CD14-positive monocyte (primary cell): ENCODE measurements at regions of chr1 and their contacts with region 1.

Region 1: GRCh38 chr1:155989242-155990004 is 11.1 kb upstream of the ARHGEF2 start:
- DNase-seq: peak; percentile 80 to 89 (median 85)
- H3K4me3 ChIP-seq: peak overlapping the region; percentile 28 to 72 (median 35)
- H3K4me3 Mint-ChIP-seq: peak overlapping the region; percentile 79 to 89
- H3K27ac ChIP-seq: peak overlapping the region; percentile 94 to 97
- H3K27ac Mint-ChIP-seq: peak overlapping the region; percentile 97 to 100 (median 99)
- H3K4me1 ChIP-seq: peaks cover 40 to 41% of the 10 kb centered on the region in 2 donors
- H3K4me1 Mint-ChIP-seq: peaks cover 50% of the 10 kb centered on the region
- H3K27me3 ChIP-seq: no peaks in the 10 kb centered on the region
- H3K27me3 Mint-ChIP-seq: no peaks in the 10 kb centered on the region
- CTCF ChIP-seq: peak; percentile 99

Region 2: DNA sequence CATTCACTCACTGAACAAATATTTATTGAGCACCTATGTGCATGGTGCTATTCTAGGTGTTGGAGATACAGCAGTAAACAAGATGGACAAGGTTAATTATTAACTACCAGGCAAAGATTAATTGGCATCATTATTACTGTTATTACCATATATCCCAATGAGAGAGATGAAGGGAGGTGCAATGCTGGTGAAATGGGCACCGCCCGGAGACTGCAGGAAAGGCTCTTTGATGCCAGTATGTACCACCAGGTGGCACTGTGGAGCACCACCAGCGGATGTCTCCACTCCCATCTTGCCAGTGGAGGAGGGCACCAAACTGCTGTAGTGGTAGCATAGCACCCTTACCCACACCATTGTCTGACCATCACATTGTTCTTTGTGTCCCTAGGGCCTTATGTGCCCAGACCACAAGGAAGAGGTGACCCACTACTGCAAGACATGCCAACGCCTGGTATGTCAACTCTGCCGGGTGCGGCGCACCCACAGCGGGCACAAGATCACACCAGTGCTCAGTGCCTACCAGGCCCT is 812.8 kb before region 1 on chr1:
- intact Hi-C with region 1: no loop called
- DNase-seq: peak; percentile 73 to 76 (median 73)
- H3K4me3 ChIP-seq: no peak overlapping the region
- H3K4me3 Mint-ChIP-seq: no peak overlapping the region
- H3K27ac ChIP-seq: no peak overlapping the region
- H3K27ac Mint-ChIP-seq: peak overlapping the region in 1 of 7 donors; percentile 30
- H3K4me1 ChIP-seq: peaks cover 42 to 52% of the 10 kb centered on the region in 2 donors
- H3K4me1 Mint-ChIP-seq: peaks cover 48% of the 10 kb centered on the region
- H3K27me3 ChIP-seq: no peaks in the 10 kb centered on the region
- H3K27me3 Mint-ChIP-seq: peaks cover 4 to 22% (median 21%) of the 10 kb centered on the region in 3 donors
- CTCF ChIP-seq: peak; percentile 92

Region 3: DNA sequence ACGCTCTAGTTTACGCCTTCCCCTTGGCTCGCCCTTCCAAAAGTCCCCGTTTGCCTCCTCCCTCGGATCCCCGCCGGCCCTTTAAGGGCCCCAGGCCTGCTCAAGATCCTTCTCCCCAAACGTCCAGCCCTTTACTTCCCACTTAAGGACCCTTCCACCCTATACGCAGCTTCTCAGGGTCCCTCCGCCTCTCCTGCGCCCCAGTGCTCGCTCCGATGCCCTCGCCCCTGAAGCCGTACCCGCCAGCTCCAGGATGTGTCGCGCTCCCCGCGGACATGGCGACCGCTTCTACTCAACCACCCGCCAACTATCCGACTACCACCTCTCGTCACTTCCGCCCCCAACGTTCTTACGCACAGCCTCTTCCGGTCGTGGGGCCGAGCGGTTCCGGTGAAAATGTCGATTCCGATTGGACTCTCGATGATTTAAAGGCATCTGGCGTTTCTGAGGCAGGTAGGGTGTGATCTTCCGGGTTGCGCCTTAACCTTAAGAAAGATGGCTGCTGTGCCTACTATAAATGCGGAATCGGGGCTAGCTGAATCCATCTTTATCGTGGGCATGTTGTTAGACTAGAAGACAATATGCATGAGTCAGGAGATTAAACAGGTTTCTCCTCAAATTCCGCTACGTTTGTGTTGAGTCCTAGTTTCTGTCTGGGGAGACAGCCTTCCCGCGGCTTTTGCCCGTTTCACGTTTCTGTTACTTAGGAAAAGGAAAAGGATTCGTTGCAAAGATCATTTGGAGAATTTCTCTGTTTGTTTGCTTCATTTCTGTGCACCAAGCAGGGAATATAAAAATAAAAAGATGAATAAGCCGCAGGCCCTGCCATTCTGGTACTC is 55.1 kb before region 1 on chr1 and contains the start of gene KHDC4:
- intact Hi-C with region 1: loop called in 1 of 2 experiments (anchors 2 kb)
- DNase-seq: peak; percentile 98 to 99 (median 99)
- H3K4me3 ChIP-seq: peak within 1 kb of the TSS; percentile 63 to 96 (median 94)
- H3K4me3 Mint-ChIP-seq: no peak within 1 kb of the TSS
- H3K27ac ChIP-seq: peak within 1 kb of the TSS; percentile 88 to 94
- H3K27ac Mint-ChIP-seq: peak within 1 kb of the TSS in 1 of 7 donors; percentile 87
- H3K4me1 ChIP-seq: peaks cover 22 to 44% of the 10 kb centered on the region in 2 donors
- H3K4me1 Mint-ChIP-seq: peaks cover 25% of the 10 kb centered on the region
- H3K27me3 ChIP-seq: no peaks in the 10 kb centered on the region
- H3K27me3 Mint-ChIP-seq: peaks cover 0 to 2% (median 0%) of the 10 kb centered on the region in 3 donors
- CTCF ChIP-seq: peak; percentile 28
- polyA plus RNA-seq, gene KHDC4: 3.4 to 22.0 (median 3.5) TPM

Region 4: GRCh38 chr1:155946633-155947219 is 42.7 kb before region 1 on chr1:
- intact Hi-C with region 1: loop called in 1 of 2 experiments (anchors 2 kb)
- DNase-seq: no peak
- H3K4me3 ChIP-seq: peak overlapping the region in 1 of 3 experiments; percentile 59
- H3K4me3 Mint-ChIP-seq: peak overlapping the region in 1 of 2 donors; percentile 64
- H3K27ac ChIP-seq: peak overlapping the region; percentile 75 to 81
- H3K27ac Mint-ChIP-seq: peak overlapping the region; percentile 85 to 97 (median 94)
- H3K4me1 ChIP-seq: peaks cover 76 to 83% of the 10 kb centered on the region in 2 donors
- H3K4me1 Mint-ChIP-seq: peaks cover 71% of the 10 kb centered on the region
- H3K27me3 ChIP-seq: no peaks in the 10 kb centered on the region
- H3K27me3 Mint-ChIP-seq: peaks cover 0 to 2% (median 0%) of the 10 kb centered on the region in 3 donors
- CTCF ChIP-seq: no peak

Region 5: GRCh38 chr1:155961937-155962336 is 27.5 kb before region 1 on chr1:
- intact Hi-C with region 1: loop called in 1 of 2 experiments (anchors 2 kb)
- DNase-seq: peak; percentile 85 to 95 (median 86)
- H3K4me3 ChIP-seq: peak overlapping the region in 1 of 3 experiments; percentile 5
- H3K4me3 Mint-ChIP-seq: peak overlapping the region in 1 of 2 donors; percentile 49
- H3K27ac ChIP-seq: peak overlapping the region; percentile 91 to 93
- H3K27ac Mint-ChIP-seq: peak overlapping the region; percentile 93 to 99 (median 97)
- H3K4me1 ChIP-seq: peaks cover 50 to 51% of the 10 kb centered on the region in 2 donors
- H3K4me1 Mint-ChIP-seq: peaks cover 46% of the 10 kb centered on the region
- H3K27me3 ChIP-seq: no peaks in the 10 kb centered on the region
- H3K27me3 Mint-ChIP-seq: no peaks in the 10 kb centered on the region
- CTCF ChIP-seq: no peak

Region 6: GRCh38 chr1:155976062-155976912 is 13.1 kb before region 1 on chr1:
- intact Hi-C with region 1: loop called in 1 of 2 experiments (anchors 1 kb)
- DNase-seq: no peak
- H3K4me3 ChIP-seq: peak overlapping the region; percentile 93 to 96 (median 94)
- H3K4me3 Mint-ChIP-seq: peak overlapping the region; percentile 96 to 98
- H3K27ac ChIP-seq: peak overlapping the region; percentile 81 to 97
- H3K27ac Mint-ChIP-seq: peak overlapping the region; percentile 91 to 99 (median 96)
- H3K4me1 ChIP-seq: peaks cover 73 to 87% of the 10 kb centered on the region in 2 donors
- H3K4me1 Mint-ChIP-seq: peaks cover 70% of the 10 kb centered on the region
- H3K27me3 ChIP-seq: no peaks in the 10 kb centered on the region
- H3K27me3 Mint-ChIP-seq: peaks cover 0 to 8% (median 1%) of the 10 kb centered on the region in 3 donors
- CTCF ChIP-seq: no peak

Region 7: DNA sequence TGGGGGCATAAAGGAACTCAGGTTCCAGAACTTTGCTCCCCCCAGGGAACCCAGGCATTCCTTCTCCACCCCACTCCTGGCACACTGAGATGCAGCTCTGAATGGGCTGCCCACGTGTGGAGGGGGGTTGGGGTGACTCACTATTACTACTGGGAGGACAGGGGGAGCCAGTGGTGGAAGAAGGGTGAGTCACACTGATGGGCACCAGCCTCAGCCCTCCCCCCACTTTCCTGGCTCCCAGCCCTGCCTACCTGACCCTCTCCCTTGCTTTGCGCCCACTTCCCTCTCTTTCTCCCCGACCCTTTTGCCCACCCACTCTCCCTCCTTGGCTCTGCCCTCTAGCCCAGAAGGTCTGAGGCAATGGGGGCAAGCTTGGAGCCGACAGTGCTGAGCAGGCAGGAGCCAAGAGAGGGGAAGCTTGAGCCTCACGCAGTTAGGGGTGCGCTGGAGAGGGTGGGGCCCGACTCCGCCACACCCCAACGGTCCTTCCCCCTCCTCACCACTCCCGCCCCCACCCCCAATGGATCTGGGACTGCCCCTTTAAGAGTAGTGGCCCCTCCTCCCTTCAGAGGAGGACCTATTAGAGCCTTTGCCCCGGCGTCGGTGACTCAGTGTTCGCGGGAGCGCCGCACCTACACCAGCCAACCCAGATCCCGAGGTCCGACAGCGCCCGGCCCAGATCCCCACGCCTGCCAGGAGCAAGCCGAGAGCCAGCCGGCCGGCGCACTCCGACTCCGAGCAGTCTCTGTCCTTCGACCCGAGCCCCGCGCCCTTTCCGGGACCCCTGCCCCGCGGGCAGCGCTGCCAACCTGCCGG is 124.9 kb after region 1 on chr1 and contains the start of gene LMNA:
- intact Hi-C with region 1: no loop called
- DNase-seq: peak; percentile 89 to 98 (median 93)
- H3K4me3 ChIP-seq: peak within 1 kb of the TSS; percentile 60 to 78 (median 71)
- H3K4me3 Mint-ChIP-seq: peak within 1 kb of the TSS; percentile 89 to 95
- H3K27ac ChIP-seq: peak within 1 kb of the TSS in 1 of 2 donors; percentile 68
- H3K27ac Mint-ChIP-seq: peak within 1 kb of the TSS; percentile 64 to 94 (median 89)
- H3K4me1 ChIP-seq: peaks cover 24 to 30% of the 10 kb centered on the region in 2 donors
- H3K4me1 Mint-ChIP-seq: peaks cover 32% of the 10 kb centered on the region
- H3K27me3 ChIP-seq: peaks cover 76 to 100% of the 10 kb centered on the region in 2 donors
- H3K27me3 Mint-ChIP-seq: peaks cover 97 to 100% (median 98%) of the 10 kb centered on the region in 3 donors
- CTCF ChIP-seq: no peak
- polyA plus RNA-seq, gene LMNA: 16.5 to 45.5 (median 24.7) TPM